IMR-90 (cell line): ENCODE measurements at regions of chr1 and their contacts with region 1.

Region 1: DNA sequence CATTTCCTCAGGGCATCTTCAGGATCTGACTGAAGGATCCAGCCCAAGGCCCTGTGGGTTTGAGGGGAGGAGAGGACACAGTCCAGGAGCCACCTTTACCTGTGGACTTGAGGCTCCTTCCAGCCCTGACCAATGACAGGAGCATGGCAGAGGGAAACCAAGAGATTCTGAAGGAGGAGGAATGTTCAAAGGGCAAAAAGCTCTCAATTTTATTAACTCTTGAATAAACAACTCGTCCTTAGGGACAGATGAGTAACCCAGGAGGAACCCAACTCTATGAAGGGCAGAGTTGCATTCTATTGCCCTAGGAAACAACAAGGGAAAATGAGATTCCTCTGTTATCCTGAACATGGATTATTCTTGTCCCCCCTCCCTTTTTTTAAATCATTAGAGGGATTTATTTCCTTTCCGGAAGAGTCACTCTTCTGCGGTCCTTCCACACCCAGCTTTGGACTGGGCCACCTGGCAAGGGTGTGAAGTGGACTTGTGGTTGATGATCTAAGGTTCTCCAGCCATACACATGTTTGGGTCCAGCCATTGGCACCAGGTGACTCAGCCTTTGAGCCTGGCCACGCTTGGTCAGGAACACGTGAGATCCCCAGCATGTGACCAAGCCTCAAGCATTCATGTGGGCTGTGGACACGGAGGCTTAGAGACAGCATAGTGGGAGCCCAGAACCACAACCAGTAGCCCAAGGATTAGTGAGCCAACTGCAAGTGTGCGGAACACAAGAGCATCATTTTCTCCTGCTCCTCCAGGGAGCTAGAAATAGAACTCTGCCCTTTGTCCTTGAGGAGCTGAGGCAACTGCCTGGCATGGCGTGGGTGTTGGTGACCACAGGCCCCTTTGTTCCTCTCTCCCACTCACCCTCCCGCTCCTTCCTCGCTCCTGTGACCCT is 49.9 kb downstream of the NENF start:
- DNase-seq: peak; percentile 51
- ATAC-seq: peak; percentile 45
- H3K4me3 ChIP-seq: no peak overlapping the region
- H3K27ac ChIP-seq: no peak overlapping the region
- H3K4me1 ChIP-seq: peaks cover 18% of the 10 kb centered on the region
- H3K27me3 ChIP-seq: no peaks in the 10 kb centered on the region
- CTCF ChIP-seq: no peak
- POLR2A ChIP-seq: no peak
- RAD21 ChIP-seq: no peak

Region 2: GRCh38 chr1:212595787-212596714 is 113.4 kb after region 1 on chr1:
- CTCF ChIA-PET with region 1: no interaction called
- POLR2A ChIA-PET with region 1: no interaction called
- dilution Hi-C with region 1: no loop called
- in situ Hi-C with region 1: loop called (anchors 5 kb)
- intact Hi-C with region 1: loop called (anchors 1 kb)
- DNase-seq: peak; percentile 99
- ATAC-seq: peak; percentile 90
- H3K4me3 ChIP-seq: peak overlapping the region; percentile 31; the same call in 1 of the 2 replicates
- H3K27ac ChIP-seq: peak overlapping the region; percentile 98
- H3K4me1 ChIP-seq: peaks cover 10% of the 10 kb centered on the region
- H3K27me3 ChIP-seq: peaks cover 9% of the 10 kb centered on the region
- CTCF ChIP-seq: peak; percentile 75
- POLR2A ChIP-seq: peak; percentile 14; the same call in 1 of the 2 replicates
- RAD21 ChIP-seq: peak; percentile 68